ENCODE measurements at regions of chr2 and their contacts with region 1.

Region 1: DNA sequence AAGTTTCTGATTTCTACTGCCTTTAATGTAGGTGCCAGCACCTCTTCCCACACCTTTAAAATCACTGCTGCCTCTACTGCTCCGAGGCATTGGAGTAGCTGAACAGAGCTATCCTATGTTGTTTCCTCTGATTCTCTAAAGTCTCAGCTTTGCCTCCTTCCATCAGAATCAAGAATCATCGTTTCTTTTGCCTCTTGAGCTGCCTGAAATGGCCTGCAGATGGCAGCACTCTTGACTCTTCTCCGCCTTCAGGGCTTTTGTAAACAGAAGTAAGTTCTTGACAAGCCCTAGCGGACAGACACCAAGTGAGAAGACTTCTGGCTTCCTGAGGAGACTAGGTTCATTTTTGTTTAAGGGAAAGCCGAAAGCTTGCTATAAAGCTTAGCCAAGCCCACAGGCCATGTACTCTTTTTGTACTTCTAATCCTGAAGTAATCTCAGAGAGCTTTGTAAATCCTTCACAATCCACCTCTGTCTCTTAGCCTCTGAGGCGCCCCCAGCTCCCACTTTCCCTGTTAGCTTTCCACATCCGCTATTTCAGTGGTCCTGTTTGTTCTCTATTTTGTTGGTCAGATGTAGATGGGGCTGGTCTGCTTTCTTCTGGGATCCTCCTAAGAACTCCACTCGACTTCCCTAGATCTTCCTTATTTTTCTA is 48.4 kb downstream of the GTF3C3 start:
- DNase-seq: peak; percentile 61
- ATAC-seq: peak; percentile 84
- H3K4me3 ChIP-seq: no peak overlapping the region
- H3K27ac ChIP-seq: no peak overlapping the region
- H3K4me1 ChIP-seq: no peaks in the 10 kb centered on the region
- H3K27me3 ChIP-seq: no peaks in the 10 kb centered on the region
- CTCF ChIP-seq: peak; percentile 65
- POLR2A ChIP-seq: no peak
- RAD21 ChIP-seq: peak; percentile 42

Region 2: GRCh38 chr2:196291873-196292800 is 459.0 kb before region 1 on chr2:
- CTCF ChIA-PET with region 1: no interaction called
- POLR2A ChIA-PET with region 1: no interaction called
- dilution Hi-C with region 1: no loop called
- in situ Hi-C with region 1: loop called (anchors 10 kb)
- intact Hi-C with region 1: no loop called
- DNase-seq: no peak
- ATAC-seq: no peak
- H3K4me3 ChIP-seq: no peak overlapping the region
- H3K27ac ChIP-seq: no peak overlapping the region
- H3K4me1 ChIP-seq: peaks cover 11% of the 10 kb centered on the region
- H3K27me3 ChIP-seq: no peaks in the 10 kb centered on the region
- CTCF ChIP-seq: no peak
- POLR2A ChIP-seq: no peak
- RAD21 ChIP-seq: no peak

Region 3: GRCh38 chr2:196719110-196719872 is 31.8 kb before region 1 on chr2:
- CTCF ChIA-PET with region 1: no interaction called
- POLR2A ChIA-PET with region 1: interaction called, 10 read pairs
- dilution Hi-C with region 1: no loop called
- in situ Hi-C with region 1: no loop called
- intact Hi-C with region 1: no loop called
- DNase-seq: peak; percentile 75
- ATAC-seq: peak; percentile 98
- H3K4me3 ChIP-seq: no peak overlapping the region
- H3K27ac ChIP-seq: no peak overlapping the region
- H3K4me1 ChIP-seq: no peaks in the 10 kb centered on the region
- H3K27me3 ChIP-seq: no peaks in the 10 kb centered on the region
- CTCF ChIP-seq: peak; percentile 18; the same call in 1 of the 2 replicates
- POLR2A ChIP-seq: no peak
- RAD21 ChIP-seq: no peak

Region 4: GRCh38 chr2:197268786-197269584 is 517.9 kb after region 1 on chr2:
- CTCF ChIA-PET with region 1: no interaction called
- POLR2A ChIA-PET with region 1: no interaction called
- dilution Hi-C with region 1: no loop called
- in situ Hi-C with region 1: no loop called
- intact Hi-C with region 1: no loop called
- DNase-seq: peak; percentile 32
- ATAC-seq: peak; percentile 62
- H3K4me3 ChIP-seq: no peak overlapping the region
- H3K27ac ChIP-seq: no peak overlapping the region
- H3K4me1 ChIP-seq: peaks cover 6% of the 10 kb centered on the region
- H3K27me3 ChIP-seq: no peaks in the 10 kb centered on the region
- CTCF ChIP-seq: no peak
- POLR2A ChIP-seq: no peak
- RAD21 ChIP-seq: no peak

Region 5: GRCh38 chr2:197480165-197481036 is 729.3 kb after region 1 on chr2:
- CTCF ChIA-PET with region 1: no interaction called
- POLR2A ChIA-PET with region 1: no interaction called
- dilution Hi-C with region 1: no loop called
- in situ Hi-C with region 1: no loop called
- intact Hi-C with region 1: no loop called
- DNase-seq: no peak
- ATAC-seq: no peak
- H3K4me3 ChIP-seq: no peak overlapping the region
- H3K27ac ChIP-seq: no peak overlapping the region
- H3K4me1 ChIP-seq: no peaks in the 10 kb centered on the region
- H3K27me3 ChIP-seq: no peaks in the 10 kb centered on the region
- CTCF ChIP-seq: no peak
- POLR2A ChIP-seq: no peak
- RAD21 ChIP-seq: no peak

Measured in IMR-90 (cell line).